A673 (cell line): ENCODE measurements at regions of chr4 and their contacts with region 1.

Region 1: DNA sequence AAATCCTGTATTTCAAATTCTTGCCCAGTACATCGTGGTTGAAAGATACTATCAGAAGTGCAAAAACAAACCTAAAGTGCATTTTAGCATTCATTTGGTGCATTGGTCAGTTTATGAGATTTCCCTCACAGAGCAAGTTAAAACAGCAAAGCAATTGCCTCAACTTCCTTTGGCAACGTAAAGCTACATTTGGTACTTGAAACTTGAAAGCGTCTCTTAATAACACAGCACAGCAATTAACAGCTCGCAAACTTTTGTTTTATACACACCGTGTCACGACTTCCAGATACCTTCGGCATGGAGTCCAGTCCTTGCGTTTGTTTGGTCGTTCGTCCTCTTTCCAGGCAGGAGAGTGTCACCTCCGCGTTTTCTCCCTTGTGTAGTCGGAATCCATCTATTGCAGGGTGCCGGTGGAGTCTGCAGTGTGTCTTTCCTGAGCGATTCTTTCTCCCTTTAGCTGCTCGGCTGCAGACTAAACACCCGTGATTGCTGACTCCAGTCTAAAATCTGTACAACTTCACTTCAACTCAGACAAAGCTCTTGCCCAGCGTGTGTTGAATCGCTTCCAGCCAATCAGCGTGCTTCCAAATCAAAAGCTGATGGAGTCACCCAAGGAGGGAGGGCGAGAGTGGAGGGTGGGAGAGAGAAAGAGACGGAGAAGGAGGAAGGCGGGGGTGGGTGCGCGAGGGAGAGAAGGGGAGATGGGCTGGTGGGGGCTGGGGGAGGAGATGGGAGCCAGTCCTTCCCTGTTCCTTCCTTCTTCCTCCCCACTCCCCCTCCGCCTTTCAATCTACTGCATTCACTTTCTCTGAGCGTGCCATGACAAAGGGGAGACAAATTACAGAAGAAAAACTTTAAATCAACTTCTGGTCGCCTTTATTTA is at the start of gene PCDH18:
- DNase-seq: peak; percentile 97
- H3K4me3 ChIP-seq: peak within 1 kb of the TSS; percentile 62
- H3K27ac ChIP-seq: peak within 1 kb of the TSS; percentile 60
- H3K4me1 ChIP-seq: peaks cover 22% of the 10 kb centered on the region
- H3K27me3 ChIP-seq: no peaks in the 10 kb centered on the region
- CTCF ChIP-seq: no peak
- total RNA-seq, gene PCDH18: 7.8 and 10.0 TPM in 2 replicates

Region 2: DNA sequence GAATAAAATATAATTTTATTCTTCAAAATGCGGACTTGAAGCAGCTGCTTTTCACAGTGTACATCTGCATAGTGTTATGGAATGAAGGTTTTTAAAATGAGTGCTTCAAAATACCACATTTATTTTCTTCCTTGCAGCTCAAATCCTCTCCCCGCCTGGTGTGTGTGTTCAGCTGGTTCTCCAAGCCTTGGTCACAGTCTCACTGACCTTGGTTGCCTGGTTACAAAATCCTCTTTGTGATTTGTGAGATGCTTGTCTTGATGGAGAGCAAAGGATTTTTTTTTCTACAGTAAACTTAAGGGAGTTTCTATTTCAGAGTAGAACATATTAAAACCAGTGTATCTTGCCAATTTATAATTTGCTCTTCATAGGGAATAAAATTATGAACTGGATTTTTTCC is 139.2 kb before region 1 on chr4:
- CTCF ChIA-PET with region 1: no interaction called
- POLR2A ChIA-PET with region 1: no interaction called
- intact Hi-C with region 1: loop called (anchors 5 kb)
- DNase-seq: no peak
- H3K4me3 ChIP-seq: no peak overlapping the region
- H3K27ac ChIP-seq: no peak overlapping the region
- H3K4me1 ChIP-seq: peaks cover 32% of the 10 kb centered on the region
- H3K27me3 ChIP-seq: no peaks in the 10 kb centered on the region
- CTCF ChIP-seq: no peak

Region 3: GRCh38 chr4:137664046-137664387 is 131.8 kb after region 1 on chr4:
- CTCF ChIA-PET with region 1: no interaction called
- POLR2A ChIA-PET with region 1: no interaction called
- intact Hi-C with region 1: loop called (anchors 5 kb)
- DNase-seq: peak; percentile 94
- H3K4me3 ChIP-seq: no peak overlapping the region
- H3K27ac ChIP-seq: peak overlapping the region; percentile 91
- H3K4me1 ChIP-seq: peaks cover 30% of the 10 kb centered on the region
- H3K27me3 ChIP-seq: no peaks in the 10 kb centered on the region
- CTCF ChIP-seq: no peak